Common myeloid progenitor, CD34-positive (primary cell): ENCODE measurements at regions of chr11 and their contacts with region 1.

Region 1: GRCh38 chr11:113289431-113290187 is 24.8 kb upstream of the TTC12 start:
- DNase-seq: peak; percentile 31 to 71 (median 64)
- H3K4me3 ChIP-seq: no peak overlapping the region
- H3K27ac ChIP-seq: no peak overlapping the region
- H3K4me1 ChIP-seq: no peaks in the 10 kb centered on the region
- H3K27me3 ChIP-seq: peaks cover 0 to 7% (median 0%) of the 10 kb centered on the region in 5 experiments

Region 2: DNA sequence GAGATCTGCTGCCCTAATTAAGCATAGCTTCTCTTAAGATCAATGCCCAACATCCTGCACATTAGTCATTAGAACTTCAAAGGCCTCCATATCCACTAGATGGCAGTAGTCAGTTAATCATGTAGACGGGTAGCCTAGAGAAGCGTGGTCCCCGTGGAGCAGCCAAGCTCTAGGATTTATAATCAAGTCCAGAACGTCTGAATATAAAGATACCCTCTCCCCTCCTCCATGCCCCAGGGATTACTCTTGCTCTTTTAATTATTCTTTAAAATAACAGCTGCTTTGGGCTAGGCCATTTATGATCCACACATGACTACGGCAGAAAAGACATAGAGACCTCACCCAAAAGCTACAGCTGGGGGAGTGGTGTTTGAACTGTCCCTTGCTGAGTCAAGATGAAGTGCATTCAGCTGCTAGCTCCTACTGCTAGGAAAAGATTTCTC is 701.3 kb before region 1 on chr11:
- CTCF ChIA-PET with region 1: interaction called, 39 read pairs
- POLR2A ChIA-PET with region 1: no interaction called
- DNase-seq: peak; percentile 68 to 84 (median 76)
- H3K4me3 ChIP-seq: no peak overlapping the region
- H3K27ac ChIP-seq: no peak overlapping the region
- H3K4me1 ChIP-seq: no peaks in the 10 kb centered on the region
- H3K27me3 ChIP-seq: peaks cover 0 to 2% (median 0%) of the 10 kb centered on the region in 5 experiments

Region 3: DNA sequence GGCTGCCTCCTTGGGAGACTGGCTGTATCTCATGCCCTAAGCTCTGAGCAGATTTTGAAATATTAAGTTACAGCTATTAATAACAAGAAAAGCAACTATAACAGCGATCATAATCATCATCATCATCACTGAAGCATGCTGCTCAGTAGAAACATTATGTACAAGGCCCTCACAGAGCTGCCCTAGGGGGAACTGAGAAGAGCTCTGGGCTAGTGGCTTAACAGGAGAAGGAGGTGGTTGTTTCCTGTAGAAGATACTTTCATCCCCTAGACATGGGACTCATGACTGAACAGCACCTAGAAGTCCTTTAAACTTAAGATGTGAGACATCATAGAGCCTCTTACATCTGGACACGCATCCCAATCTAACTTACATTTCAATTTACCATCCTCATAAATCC is 696.2 kb before region 1 on chr11:
- CTCF ChIA-PET with region 1: interaction called, 39 read pairs
- POLR2A ChIA-PET with region 1: no interaction called
- DNase-seq: no peak
- H3K4me3 ChIP-seq: no peak overlapping the region
- H3K27ac ChIP-seq: no peak overlapping the region
- H3K4me1 ChIP-seq: no peaks in the 10 kb centered on the region
- H3K27me3 ChIP-seq: peaks cover 0 to 3% (median 0%) of the 10 kb centered on the region in 5 experiments